ENCODE measurements at regions of chr20 and their contacts with region 1.

Region 1: DNA sequence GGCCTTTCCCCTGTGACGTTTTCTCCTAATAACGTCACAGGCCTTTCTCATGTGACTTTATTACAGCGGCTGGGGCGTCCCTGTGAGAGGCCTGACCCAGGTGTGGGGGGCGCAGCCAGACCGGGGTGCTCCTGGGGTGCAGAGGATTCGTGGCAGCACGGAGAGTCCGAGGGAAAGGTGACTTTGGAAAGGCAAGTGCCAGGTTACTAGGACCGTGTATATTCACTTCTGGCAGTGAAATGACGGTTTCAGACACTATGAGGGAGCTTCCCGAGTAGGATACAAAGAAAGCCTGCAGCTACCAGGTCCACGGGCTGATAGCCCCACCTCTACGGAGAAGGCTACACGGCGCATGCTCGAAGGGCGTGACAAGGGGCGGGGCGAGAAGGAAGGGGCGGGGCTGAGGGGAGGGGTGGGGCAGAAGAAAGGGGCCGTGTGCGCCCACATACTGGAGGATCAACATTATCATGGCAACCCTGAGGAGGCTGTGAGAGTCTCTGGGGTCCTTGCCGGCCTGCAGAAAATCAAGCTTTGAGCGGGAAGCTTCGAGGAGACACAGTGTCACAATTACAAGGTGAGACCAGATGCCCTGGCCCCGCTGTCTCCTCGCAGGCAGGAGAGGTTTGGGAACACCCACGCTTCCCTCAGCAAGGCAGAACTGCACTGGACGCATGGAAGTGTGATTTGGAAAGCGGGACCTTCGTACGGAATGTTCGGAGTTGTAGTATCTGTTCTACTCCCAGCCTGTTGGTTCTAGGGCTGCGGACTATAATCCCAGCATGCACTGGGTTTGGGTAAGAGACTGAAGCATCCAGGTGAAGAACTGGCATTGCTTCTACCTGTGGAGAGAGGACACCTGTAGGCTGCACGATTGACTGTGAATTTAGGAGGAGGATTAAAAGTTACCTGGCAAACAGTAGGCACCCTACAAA is 54.4 kb upstream of the ZNF337 start:
- DNase-seq: no peak
- ATAC-seq: peak; percentile 92

Region 2: DNA sequence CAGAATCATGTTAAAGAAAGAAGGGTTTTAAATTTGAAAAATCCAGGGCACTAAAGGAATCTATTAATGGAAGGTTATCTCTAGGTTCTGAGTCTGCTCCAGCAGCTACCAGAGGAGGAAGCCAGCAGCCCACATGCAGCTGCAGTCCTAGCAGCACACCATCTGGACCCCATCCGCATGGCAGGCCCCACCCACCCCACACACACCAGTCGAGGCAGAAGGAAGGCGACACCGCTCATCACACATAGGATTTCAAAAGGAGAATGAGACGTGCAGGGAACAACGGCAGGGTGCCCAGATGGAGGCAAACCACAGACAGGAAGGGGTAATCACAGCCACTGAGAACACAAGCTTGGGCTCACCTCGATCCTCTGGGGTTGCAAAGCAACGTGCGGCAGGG is 264.7 kb before region 1 on chr20:
- intact Hi-C with region 1: no loop called
- DNase-seq: peak; percentile 71
- ATAC-seq: peak; percentile 69

Region 3: DNA sequence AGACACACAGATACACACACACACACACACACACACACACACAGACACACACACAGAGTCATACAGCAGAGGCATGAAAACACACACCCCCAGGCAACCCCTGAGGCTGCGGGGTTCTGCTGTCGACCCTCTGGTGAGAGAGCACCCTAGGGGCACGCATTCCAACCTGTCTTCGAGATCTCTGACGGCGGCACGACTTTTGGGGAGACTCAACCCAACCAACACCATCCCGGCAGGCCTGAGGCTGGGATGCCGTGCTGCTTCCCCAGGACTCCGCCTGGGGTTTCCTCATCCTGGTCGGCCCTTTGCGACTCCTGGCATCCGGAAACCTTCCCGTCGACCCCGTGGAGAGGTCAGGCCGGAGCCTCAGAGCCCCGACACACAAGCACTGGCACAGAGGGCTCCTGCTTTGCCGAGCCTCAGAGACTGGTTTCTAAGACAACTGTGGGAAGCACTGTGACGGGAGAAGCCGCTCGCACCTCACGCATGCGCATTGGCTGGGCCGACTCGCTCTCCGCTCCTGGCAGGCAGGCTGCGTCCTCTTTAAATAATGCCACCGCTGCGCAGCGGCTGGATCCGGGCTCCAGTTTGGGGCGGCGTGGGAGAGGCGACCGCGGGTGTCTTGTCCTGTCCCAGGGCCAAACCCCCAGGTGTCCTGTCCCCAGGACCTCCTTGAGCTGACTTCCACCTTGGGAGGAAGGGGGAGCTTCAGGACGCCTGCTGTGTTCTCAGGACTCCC is 114.5 kb after region 1 on chr20:
- intact Hi-C with region 1: loop called (anchors 5 kb)
- DNase-seq: peak; percentile 89
- ATAC-seq: peak; percentile 54